ENCODE measurements at regions of chr2 and their contacts with region 1.

Region 1: DNA sequence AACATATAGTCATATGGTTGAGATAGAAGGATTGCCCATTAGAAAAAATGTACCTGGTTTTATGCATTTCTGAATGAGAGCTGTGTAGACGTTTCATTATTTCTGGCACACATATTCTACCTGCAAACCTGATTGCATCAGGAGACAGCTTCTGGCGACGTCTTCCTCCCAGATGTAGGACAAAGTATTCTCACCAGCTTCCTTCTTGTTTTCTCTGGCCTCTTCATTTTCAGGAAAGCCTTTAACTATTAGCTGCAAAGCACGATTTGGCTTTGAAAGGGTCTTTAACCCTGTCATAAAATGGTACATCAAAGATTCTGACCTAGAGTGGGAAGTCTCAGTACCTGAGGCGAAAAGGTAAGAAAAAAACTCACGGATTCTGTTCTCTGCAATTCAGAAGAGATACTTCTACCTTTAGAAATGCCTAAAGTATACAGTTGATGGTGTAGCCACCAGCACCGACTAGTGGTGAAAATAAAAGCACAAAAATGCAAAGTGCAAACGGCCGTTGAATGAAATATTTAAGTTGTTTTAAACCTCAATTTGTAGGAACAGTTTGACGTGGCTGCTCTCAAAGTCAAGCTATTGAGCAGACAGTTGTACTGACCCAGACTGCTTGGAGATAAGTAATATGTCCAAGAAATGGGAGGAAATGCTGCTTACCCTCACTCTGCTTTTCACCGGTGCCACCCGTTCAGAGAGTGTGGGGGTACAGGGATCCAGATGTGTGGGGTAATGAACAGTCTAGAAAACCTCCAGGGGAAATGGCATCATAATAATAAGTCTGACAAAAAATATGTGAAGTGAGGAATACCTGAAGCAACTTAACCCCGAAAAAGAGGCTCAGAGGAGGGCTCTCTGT is 20.2 kb downstream of the IL18RAP start:
- DNase-seq: no peak
- ATAC-seq: peak in 3 of 8 donors; percentile 22 to 72 (median 52)
- H3K4me3 ChIP-seq: no peak overlapping the region
- H3K27ac ChIP-seq: no peak overlapping the region
- H3K4me1 ChIP-seq: peaks cover 0 to 16% (median 0%) of the 10 kb centered on the region in 9 donors
- H3K27me3 ChIP-seq: peaks cover 0 to 3% (median 0%) of the 10 kb centered on the region in 7 donors
- CTCF ChIP-seq: peak; percentile 39 to 80 (median 68)

Region 2: DNA sequence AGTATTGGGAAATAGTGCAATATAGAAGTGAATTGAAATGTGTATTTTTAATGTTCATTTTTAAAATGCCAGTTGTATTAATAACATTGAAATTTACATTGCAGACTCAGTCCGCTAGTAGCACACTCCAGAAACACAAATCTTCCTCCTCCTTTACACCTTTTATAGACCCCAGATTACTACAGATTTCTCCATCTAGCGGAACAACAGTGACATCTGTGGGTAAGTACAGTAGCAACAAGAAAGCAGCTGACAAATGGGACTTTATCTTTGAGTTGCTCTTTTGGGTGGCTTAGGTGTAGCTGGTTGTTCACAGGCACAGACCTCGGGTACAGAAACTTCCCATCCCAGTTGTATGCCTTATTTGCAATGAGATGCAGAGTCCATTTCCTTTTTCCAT is 569.7 kb before region 1 on chr2:
- intact Hi-C with region 1: loop called in 1 of 10 experiments (anchors 10 kb)
- DNase-seq: no peak
- ATAC-seq: no peak
- H3K4me3 ChIP-seq: no peak overlapping the region
- H3K27ac ChIP-seq: no peak overlapping the region
- H3K4me1 ChIP-seq: peaks cover 0 to 6% (median 0%) of the 10 kb centered on the region in 9 donors
- H3K27me3 ChIP-seq: no peaks in the 10 kb centered on the region
- CTCF ChIP-seq: peak in 4 of 9 donors; percentile 16 to 38 (median 26)

Region 3: GRCh38 chr2:102005989-102006885 is 437.0 kb before region 1 on chr2:
- intact Hi-C with region 1: loop called in 6 of 10 experiments (anchors 5 to 10 kb)
- DNase-seq: peak in 1 of 2 donors; percentile 51
- ATAC-seq: peak; percentile 39 to 82 (median 72)
- H3K4me3 ChIP-seq: no peak overlapping the region
- H3K27ac ChIP-seq: peak overlapping the region in 1 of 10 donors; percentile 15
- H3K4me1 ChIP-seq: peaks cover 0 to 39% (median 4%) of the 10 kb centered on the region in 9 donors
- H3K27me3 ChIP-seq: no peaks in the 10 kb centered on the region
- CTCF ChIP-seq: peak; percentile 36 to 77 (median 68)

Region 4: DNA sequence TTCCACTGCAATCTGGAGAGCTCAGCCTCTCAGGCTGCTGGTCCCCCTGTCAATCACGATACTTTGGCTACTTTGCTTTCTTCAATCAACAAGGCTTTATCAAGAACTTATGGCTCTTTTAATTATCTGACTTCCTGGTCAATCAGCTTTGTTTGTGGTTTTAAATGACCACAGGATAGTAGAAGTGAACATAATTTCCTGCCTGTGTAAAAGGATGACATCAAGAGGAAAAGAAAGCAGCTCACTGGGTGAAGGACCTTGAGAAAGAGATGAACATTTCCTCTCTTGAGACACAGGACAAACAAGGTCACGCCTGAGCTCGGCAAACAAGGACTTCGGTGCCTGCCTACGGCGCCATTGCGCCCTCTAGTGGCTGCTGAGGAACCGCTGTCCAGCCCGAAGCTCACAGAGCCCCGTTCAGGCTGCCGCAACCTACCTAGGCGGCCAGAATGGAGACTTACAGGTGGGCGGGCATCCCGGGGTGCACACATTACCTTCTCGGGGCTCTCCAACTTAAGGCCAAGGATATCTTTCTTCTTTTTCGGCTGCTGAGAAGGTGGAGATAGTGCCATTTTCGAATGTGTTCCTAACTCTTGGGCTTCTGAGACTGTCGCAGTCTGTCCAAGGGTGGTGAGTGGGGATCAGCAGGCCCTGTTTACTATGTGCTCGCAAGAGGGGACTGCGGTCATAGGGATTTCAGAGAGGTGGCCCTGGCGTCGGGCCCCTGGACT is 202.4 kb before region 1 on chr2:
- intact Hi-C with region 1: loop called in 3 of 10 experiments (anchors 5 kb)
- DNase-seq: peak; percentile 93
- ATAC-seq: peak; percentile 93 to 97 (median 94)
- H3K4me3 ChIP-seq: peak overlapping the region in 5 of 10 donors; percentile 15 to 35 (median 19)
- H3K27ac ChIP-seq: peak overlapping the region; percentile 59 to 91 (median 78)
- H3K4me1 ChIP-seq: peaks cover 0 to 41% (median 20%) of the 10 kb centered on the region in 9 donors
- H3K27me3 ChIP-seq: peaks cover 0 to 17% (median 0%) of the 10 kb centered on the region in 7 donors
- CTCF ChIP-seq: peak; percentile 96 to 100 (median 99)

Region 5: GRCh38 chr2:102268510-102269209 is 174.5 kb before region 1 on chr2:
- intact Hi-C with region 1: loop called in 1 of 10 experiments (anchors 10 kb)
- DNase-seq: no peak
- ATAC-seq: peak in 1 of 8 donors; percentile 28
- H3K4me3 ChIP-seq: no peak overlapping the region
- H3K27ac ChIP-seq: peak overlapping the region in 1 of 10 donors; percentile 15
- H3K4me1 ChIP-seq: peaks cover 0 to 27% (median 0%) of the 10 kb centered on the region in 9 donors
- H3K27me3 ChIP-seq: peaks cover 0 to 12% (median 0%) of the 10 kb centered on the region in 7 donors
- CTCF ChIP-seq: no peak